ENCODE measurements at regions of chr2 and their contacts with region 1.

Region 1: GRCh38 chr2:47437287-47437686 is 34.3 kb downstream of the MSH2 start:
- DNase-seq: peak in 1 of 4 donors; percentile 33
- ATAC-seq: peak; percentile 59
- H3K4me3 ChIP-seq: no peak overlapping the region
- H3K27ac ChIP-seq: no peak overlapping the region
- H3K4me1 ChIP-seq: no peaks in the 10 kb centered on the region
- H3K27me3 ChIP-seq: no peaks in the 10 kb centered on the region
- CTCF ChIP-seq: peak in 1 of 2 donors; percentile 54

Region 2: DNA sequence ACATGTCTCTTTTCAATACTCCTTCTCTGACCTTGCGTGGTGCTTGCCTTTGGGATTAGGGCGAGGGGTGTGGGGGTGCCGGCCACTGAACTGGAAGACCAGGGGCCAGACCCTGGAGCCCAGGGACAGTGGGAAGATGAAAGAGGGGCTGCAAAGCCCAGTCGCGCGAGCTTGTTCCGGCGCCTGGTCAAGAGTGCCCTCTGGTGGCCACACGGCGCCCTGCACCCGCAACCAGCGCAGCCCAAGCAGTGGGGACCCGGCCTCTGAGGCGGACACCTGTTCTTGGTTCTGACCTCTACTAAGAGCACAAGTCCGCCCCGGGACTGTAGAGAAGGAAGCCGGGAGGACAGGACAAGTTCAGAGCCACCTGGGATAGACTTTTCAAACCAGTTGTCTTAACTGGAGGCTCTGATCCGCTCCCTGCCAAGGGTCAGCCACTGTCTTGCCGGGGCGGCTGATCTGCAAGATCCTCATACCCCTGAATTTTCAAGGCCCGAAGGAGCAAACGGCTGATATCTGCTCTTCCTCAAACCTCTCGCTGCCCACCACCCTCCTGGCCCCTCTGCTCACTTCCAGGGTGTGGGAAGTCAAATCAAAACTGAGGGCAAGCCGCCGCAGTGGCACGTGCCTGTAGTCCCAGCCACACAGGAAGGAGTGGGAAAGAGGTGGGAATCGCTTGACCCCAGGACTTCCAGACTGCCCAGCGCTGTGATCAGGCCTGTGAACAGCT is 330.8 kb after region 1 on chr2:
- intact Hi-C with region 1: loop called in 1 of 2 experiments (anchors 5 kb)
- DNase-seq: peak; percentile 26 to 95 (median 70)
- ATAC-seq: peak; percentile 96
- H3K4me3 ChIP-seq: no peak overlapping the region
- H3K27ac ChIP-seq: no peak overlapping the region
- H3K4me1 ChIP-seq: no peaks in the 10 kb centered on the region
- H3K27me3 ChIP-seq: no peaks in the 10 kb centered on the region
- CTCF ChIP-seq: peak; percentile 98 to 99

Measured in left lung (tissue), 14 donors.